Gastrocnemius medialis (tissue), 4 donors: ENCODE measurements at regions of chr1 and their contacts with region 1.

Region 1: GRCh38 chr1:154870115-154870571 is at the start of gene KCNN3:
- DNase-seq: peak; percentile 90 to 95
- ATAC-seq: peak; percentile 85 to 87
- H3K4me3 ChIP-seq: peak within 1 kb of the TSS; percentile 52 to 71 (median 66)
- H3K27ac ChIP-seq: peak within 1 kb of the TSS; percentile 91 to 99 (median 96)
- H3K4me1 ChIP-seq: peaks cover 32 to 41% of the 10 kb centered on the region in 2 donors
- H3K27me3 ChIP-seq: no peaks in the 10 kb centered on the region
- CTCF ChIP-seq: peak in 1 of 5 experiments; percentile 7
- POLR2A ChIP-seq: peak; percentile 92 to 96
- total RNA-seq, gene KCNN3: 5.0 to 30.0 (median 20.8) TPM

Region 2: DNA sequence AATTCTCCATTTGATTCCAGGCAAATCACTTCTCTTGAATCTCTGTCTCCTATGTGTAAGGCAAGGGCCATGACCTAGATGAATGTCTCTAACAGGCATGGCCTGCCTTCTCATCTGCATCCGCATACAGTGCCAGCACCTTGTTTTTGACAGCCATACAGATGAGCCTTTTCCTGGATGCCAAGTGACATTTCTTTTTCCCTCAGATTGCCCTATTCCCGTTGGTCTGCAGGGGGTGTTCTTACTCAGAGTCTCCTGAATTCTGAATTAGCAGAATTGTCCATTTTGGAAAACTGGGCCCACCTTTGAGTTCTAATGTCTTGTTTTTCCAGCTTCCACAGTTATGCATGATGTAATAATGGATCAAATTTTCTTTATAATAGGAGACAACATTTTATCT is 174.2 kb before region 1 on chr1:
- in situ Hi-C with region 1: no loop called
- intact Hi-C with region 1: loop called (anchors 10 kb)
- DNase-seq: no peak
- ATAC-seq: no peak
- H3K4me3 ChIP-seq: no peak overlapping the region
- H3K27ac ChIP-seq: peak overlapping the region in 3 of 4 donors; percentile 71 to 81 (median 75)
- H3K4me1 ChIP-seq: peaks cover 32 to 34% of the 10 kb centered on the region in 2 donors
- H3K27me3 ChIP-seq: no peaks in the 10 kb centered on the region
- CTCF ChIP-seq: no peak
- POLR2A ChIP-seq: no peak

Region 3: GRCh38 chr1:154791292-154792166 is 78.6 kb before region 1 on chr1:
- in situ Hi-C with region 1: loop called in 1 of 4 experiments (anchors 5 kb)
- intact Hi-C with region 1: no loop called
- DNase-seq: peak in 1 of 2 donors; percentile 36
- ATAC-seq: peak; percentile 38 to 57
- H3K4me3 ChIP-seq: no peak overlapping the region
- H3K27ac ChIP-seq: peak overlapping the region in 2 of 4 donors; percentile 34 to 36
- H3K4me1 ChIP-seq: peaks cover 0 to 10% of the 10 kb centered on the region in 2 donors
- H3K27me3 ChIP-seq: no peaks in the 10 kb centered on the region
- CTCF ChIP-seq: no peak
- POLR2A ChIP-seq: no peak

Region 4: DNA sequence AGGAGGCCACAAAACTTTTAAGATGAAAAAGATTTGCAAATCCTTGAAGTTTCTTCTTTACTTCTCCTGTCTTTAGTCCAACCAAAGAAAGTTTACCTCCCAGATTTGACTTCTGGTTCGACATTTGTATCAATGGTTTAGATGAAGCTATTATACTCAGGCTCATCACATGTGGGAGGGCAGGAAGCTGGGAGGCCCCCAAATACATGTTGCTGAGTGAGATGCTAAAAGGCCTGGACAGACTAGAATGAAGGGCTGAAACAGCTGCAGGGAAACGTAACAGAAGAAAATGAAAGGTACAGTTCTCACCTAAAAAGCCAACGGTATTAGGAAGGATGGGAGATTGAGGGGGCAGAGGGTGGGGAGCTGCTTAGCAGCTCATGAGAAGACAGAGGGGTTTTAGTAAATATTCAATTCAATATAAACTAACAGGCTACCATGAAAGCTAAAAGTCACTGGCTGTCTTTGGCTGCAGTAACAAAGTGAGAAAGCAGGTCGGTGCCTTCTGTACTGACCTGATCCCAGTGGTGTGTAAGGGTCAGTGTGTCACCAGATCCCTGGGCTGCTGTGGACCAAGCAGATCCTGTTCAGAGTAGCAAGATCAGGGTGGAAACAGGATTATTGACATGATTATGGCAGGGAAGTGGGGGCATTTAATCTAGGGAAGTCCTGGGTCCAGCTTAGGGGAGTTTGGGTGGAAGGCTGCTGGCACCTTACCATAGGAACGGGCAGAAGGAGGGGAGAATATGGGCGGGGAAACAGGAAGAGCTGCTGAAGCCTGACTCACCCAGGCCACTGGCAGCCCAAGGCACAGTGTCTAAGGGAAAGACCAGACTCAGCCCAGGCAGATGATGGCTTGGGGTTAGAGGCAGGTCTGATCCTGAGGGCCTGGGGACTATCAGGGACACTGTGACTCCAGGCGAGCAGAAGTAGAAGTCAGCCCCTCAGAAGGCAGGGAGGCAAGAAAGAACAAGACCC is 60.4 kb before region 1 on chr1:
- in situ Hi-C with region 1: no loop called
- intact Hi-C with region 1: loop called (anchors 2 kb)
- DNase-seq: peak; percentile 23 to 63
- ATAC-seq: peak; percentile 63 to 64
- H3K4me3 ChIP-seq: peak overlapping the region in 1 of 4 donors; percentile 23
- H3K27ac ChIP-seq: peak overlapping the region; percentile 81 to 92 (median 85)
- H3K4me1 ChIP-seq: peaks cover 45 to 51% of the 10 kb centered on the region in 2 donors
- H3K27me3 ChIP-seq: no peaks in the 10 kb centered on the region
- CTCF ChIP-seq: no peak
- POLR2A ChIP-seq: no peak

Region 5: DNA sequence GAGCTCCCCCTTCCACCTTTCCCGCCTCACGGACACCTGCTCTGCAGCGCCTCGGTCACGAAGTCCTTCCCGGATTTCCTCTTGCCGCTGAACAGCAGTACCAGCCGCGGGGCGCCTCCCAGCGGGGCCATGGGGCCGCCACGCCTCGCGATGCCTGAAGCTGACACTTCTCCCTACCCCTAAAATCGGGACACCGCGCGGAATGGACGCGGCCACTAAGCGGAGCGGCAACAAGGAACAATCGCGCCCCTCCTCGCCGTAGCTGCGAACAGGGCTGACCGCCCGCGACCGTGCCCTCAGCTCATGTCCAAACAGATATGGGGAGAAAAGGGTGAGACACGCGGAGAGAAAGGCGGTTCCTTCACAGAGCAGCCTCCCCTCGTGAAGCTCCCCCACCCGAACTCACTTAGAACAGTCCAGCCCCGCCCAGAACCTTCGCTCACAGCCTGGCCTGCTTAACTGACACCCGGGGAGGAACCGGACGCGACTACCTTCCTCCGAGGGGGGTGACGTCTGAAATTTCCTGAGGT is 66.5 kb after region 1 on chr1 and contains the start of gene PMVK:
- in situ Hi-C with region 1: no loop called
- intact Hi-C with region 1: loop called (anchors 2 kb)
- DNase-seq: peak; percentile 92 to 95
- ATAC-seq: peak; percentile 94 to 96
- H3K4me3 ChIP-seq: peak within 1 kb of the TSS; percentile 65 to 97 (median 83)
- H3K27ac ChIP-seq: peak within 1 kb of the TSS; percentile 93 to 99 (median 98)
- H3K4me1 ChIP-seq: peaks cover 11 to 15% of the 10 kb centered on the region in 2 donors
- H3K27me3 ChIP-seq: no peaks in the 10 kb centered on the region
- CTCF ChIP-seq: peak in 3 of 5 experiments; percentile 36 to 55 (median 42)
- POLR2A ChIP-seq: peak in 1 of 2 donors; percentile 30
- total RNA-seq, gene PMVK: 4.6 to 7.6 (median 6.1) TPM

Region 6: GRCh38 chr1:155342842-155343241 is 472.7 kb after region 1 on chr1:
- in situ Hi-C with region 1: no loop called
- intact Hi-C with region 1: no loop called
- DNase-seq: no peak
- ATAC-seq: no peak
- H3K4me3 ChIP-seq: no peak overlapping the region
- H3K27ac ChIP-seq: no peak overlapping the region
- H3K4me1 ChIP-seq: no peaks in the 10 kb centered on the region
- H3K27me3 ChIP-seq: no peaks in the 10 kb centered on the region
- CTCF ChIP-seq: no peak
- POLR2A ChIP-seq: no peak